Activated CD4-positive, alpha-beta memory T cell treated with anti-CD3 and anti-CD28 coated beads for 36 hours (primary cell): ENCODE measurements at regions of chr12 and their contacts with region 1.

Region 1: GRCh38 chr12:124917135-124917840 is 2.8 kb upstream of the UBC start:
- DNase-seq: peak; percentile 97
- H3K4me3 Mint-ChIP-seq: peak overlapping the region; percentile 100
- H3K27ac Mint-ChIP-seq: peak overlapping the region; percentile 100
- H3K4me1 Mint-ChIP-seq: peaks cover 93% of the 10 kb centered on the region
- H3K27me3 Mint-ChIP-seq: peaks cover 15% of the 10 kb centered on the region

Region 2: DNA sequence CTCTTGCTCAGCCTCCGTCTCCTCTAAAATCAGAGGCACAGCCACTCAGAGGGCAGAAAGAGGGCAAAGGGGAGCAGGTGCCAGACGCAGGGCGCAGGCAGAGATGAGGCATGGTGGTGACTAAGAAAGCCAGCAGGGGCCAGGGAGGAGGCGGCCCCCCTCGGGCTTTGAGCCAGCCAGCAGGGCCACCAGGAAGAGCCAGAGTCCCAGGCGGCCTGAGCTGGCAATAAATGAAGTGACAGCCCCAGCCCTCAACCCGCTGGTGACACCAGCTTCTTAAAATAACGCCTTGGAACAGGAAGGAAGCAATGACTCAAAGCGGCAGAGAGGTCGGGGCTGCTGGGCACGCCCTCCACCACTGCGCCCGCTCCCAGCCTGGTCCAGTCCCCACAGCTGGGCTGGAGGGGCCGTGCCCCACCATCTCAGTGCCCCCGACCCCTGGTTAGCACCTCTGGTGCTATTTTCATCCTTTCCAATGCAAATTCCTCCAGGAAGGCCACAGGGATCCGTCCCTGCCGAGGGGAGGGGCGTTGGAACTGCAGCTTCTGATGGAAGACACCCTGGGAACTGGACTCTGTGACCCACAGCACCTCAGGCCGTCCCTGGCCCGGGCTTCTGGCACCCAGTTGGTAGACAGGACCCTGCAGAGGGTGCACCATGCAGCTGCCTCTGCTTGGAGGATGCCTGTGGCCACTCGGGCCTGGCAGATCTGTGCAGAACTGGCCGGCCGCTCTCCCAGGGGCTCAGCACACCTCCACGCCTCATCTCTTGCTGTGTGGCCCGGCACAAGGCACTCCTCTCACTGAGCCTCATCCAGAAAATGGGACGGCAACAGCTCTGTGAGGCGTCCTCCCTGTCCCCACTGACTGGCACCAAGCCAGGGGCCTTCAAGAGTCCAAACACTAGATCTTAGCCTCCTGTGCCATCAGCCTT is 463.6 kb before region 1 on chr12:
- CTCF ChIA-PET with region 1: no interaction called
- POLR2A ChIA-PET with region 1: no interaction called
- intact Hi-C with region 1: loop called (anchors 10 kb)
- DNase-seq: peak; percentile 94
- H3K4me3 Mint-ChIP-seq: peak overlapping the region; percentile 12
- H3K27ac Mint-ChIP-seq: peak overlapping the region; percentile 54
- H3K4me1 Mint-ChIP-seq: peaks cover 52% of the 10 kb centered on the region
- H3K27me3 Mint-ChIP-seq: no peaks in the 10 kb centered on the region

Region 3: DNA sequence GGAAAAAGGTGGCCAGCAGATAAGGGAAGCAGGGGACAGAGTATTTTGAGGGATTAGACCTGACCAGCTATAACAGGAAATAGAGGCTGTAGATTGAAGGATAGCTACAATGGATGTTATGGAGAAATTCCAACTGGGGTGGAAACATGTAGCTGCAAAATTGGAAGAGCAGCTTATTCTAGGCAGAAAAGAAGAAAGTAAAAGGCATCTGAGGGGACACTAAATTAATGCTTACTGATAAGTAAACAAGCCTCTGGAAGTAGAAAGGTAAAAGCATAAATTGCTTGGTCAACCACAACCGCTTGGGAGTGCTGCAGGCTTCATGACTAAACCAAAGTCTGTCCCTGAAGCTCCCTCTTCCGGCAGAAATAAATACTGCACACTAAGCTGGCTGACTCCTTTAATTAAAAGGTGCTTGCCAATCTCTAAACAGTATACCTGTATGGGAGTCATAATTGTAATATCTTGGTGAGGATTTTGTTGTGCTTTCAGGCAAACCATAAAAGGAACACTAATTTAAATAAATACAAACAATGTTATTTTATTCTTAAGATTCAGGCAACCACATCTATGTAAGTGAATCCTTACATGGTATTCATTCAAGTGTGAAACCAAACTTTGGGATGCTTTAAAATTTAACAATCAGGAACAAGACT is 10.6 kb before region 1 on chr12:
- CTCF ChIA-PET with region 1: interaction called, 70 read pairs
- POLR2A ChIA-PET with region 1: interaction called, 12 read pairs
- intact Hi-C with region 1: loop called (anchors 1 kb)
- DNase-seq: peak; percentile 90
- H3K4me3 Mint-ChIP-seq: no peak overlapping the region
- H3K27ac Mint-ChIP-seq: peak overlapping the region; percentile 25
- H3K4me1 Mint-ChIP-seq: peaks cover 24% of the 10 kb centered on the region
- H3K27me3 Mint-ChIP-seq: no peaks in the 10 kb centered on the region

Region 4: DNA sequence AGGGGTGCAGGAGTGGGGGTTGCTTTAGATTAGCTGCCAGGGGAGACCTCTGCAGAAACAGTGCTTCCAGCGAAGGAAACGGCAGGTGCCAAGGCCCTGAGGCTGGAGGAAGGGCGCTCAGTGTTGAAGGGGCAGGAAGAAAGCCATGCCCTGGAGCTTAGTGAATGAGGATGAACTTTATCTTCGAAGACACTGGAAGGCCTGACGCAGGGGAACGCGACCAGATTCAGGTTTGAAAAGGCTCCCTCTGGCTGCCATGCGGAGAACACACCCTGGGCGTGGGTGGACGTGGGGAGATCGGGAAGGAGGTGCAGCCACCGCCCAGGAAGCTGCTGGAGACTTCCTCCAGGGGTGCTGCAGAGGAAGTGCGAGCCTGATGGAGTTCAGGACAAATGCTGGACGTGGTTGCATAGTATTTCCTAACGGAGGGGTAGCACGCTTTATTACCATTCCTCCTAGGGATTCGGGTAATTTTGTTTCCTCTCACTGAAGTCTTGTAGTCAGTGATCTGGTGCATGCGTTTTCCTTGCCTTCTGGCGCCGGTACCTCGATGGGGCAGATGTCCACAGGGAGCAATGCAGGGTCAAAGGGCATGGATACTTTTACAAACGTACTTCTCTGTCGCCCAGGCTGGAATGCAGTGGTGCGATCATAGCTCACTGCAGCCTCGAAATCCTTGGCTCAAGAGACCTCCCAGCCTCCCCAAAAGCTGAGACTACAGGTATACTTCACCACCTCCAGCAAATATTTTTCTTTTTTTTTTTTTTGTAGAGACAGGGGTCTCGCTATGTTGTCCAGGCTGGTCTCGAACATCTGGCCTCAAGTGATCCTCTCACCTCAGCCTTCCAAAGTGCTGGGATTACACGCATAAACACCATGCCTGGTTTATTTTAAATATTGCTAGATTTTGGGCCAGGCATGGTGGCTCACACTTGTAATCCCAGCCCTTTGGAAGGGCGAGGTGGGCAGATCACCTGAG is 23.6 kb after region 1 on chr12:
- CTCF ChIA-PET with region 1: interaction called, 132 read pairs
- POLR2A ChIA-PET with region 1: interaction called, 137 read pairs
- intact Hi-C with region 1: loop called (anchors 1 kb)
- DNase-seq: peak; percentile 95
- H3K4me3 Mint-ChIP-seq: no peak overlapping the region
- H3K27ac Mint-ChIP-seq: no peak overlapping the region
- H3K4me1 Mint-ChIP-seq: peaks cover 10% of the 10 kb centered on the region
- H3K27me3 Mint-ChIP-seq: no peaks in the 10 kb centered on the region

Region 5: GRCh38 chr12:124964836-124965462 is 47.7 kb after region 1 on chr12:
- CTCF ChIA-PET with region 1: no interaction called
- POLR2A ChIA-PET with region 1: no interaction called
- intact Hi-C with region 1: no loop called
- DNase-seq: no peak
- H3K4me3 Mint-ChIP-seq: no peak overlapping the region
- H3K27ac Mint-ChIP-seq: no peak overlapping the region
- H3K4me1 Mint-ChIP-seq: no peaks in the 10 kb centered on the region
- H3K27me3 Mint-ChIP-seq: no peaks in the 10 kb centered on the region